CD8-positive, alpha-beta T cell (primary cell): ENCODE measurements at regions of chr13 and their contacts with region 1.

Region 1: GRCh38 chr13:41352935-41353840 is 42.1 kb downstream of the NAA16 start:
- DNase-seq: peak; percentile 21 to 83 (median 57)
- ATAC-seq: peak; percentile 55
- H3K4me3 ChIP-seq: no peak overlapping the region
- H3K4me3 Mint-ChIP-seq: peak overlapping the region; percentile 54
- H3K27ac ChIP-seq: peak overlapping the region in 1 of 2 experiments; percentile 58
- H3K27ac Mint-ChIP-seq: peak overlapping the region; percentile 94
- H3K4me1 ChIP-seq: peaks cover 49% of the 10 kb centered on the region
- H3K4me1 Mint-ChIP-seq: peaks cover 59% of the 10 kb centered on the region
- H3K27me3 ChIP-seq: no peaks in the 10 kb centered on the region
- H3K27me3 Mint-ChIP-seq: no peaks in the 10 kb centered on the region
- CTCF ChIP-seq: peak; percentile 95

Region 2: GRCh38 chr13:41370736-41371135 is 17.5 kb after region 1 on chr13:
- CTCF ChIA-PET with region 1: interaction called, 4 read pairs
- POLR2A ChIA-PET with region 1: no interaction called
- intact Hi-C with region 1: loop called in 1 of 2 experiments (anchors 2 kb)
- DNase-seq: no peak
- ATAC-seq: no peak
- H3K4me3 ChIP-seq: no peak overlapping the region
- H3K4me3 Mint-ChIP-seq: no peak overlapping the region
- H3K27ac ChIP-seq: no peak overlapping the region
- H3K27ac Mint-ChIP-seq: peak overlapping the region; percentile 21
- H3K4me1 ChIP-seq: no peaks in the 10 kb centered on the region
- H3K4me1 Mint-ChIP-seq: peaks cover 23% of the 10 kb centered on the region
- H3K27me3 ChIP-seq: no peaks in the 10 kb centered on the region
- H3K27me3 Mint-ChIP-seq: no peaks in the 10 kb centered on the region
- CTCF ChIP-seq: no peak

Region 3: GRCh38 chr13:41411522-41411921 is 58.3 kb after region 1 on chr13:
- CTCF ChIA-PET with region 1: no interaction called
- POLR2A ChIA-PET with region 1: no interaction called
- intact Hi-C with region 1: loop called in 1 of 2 experiments (anchors 5 kb)
- DNase-seq: peak in 4 of 9 experiments; percentile 17 to 66 (median 38)
- ATAC-seq: no peak
- H3K4me3 ChIP-seq: no peak overlapping the region
- H3K4me3 Mint-ChIP-seq: no peak overlapping the region
- H3K27ac ChIP-seq: no peak overlapping the region
- H3K27ac Mint-ChIP-seq: no peak overlapping the region
- H3K4me1 ChIP-seq: no peaks in the 10 kb centered on the region
- H3K4me1 Mint-ChIP-seq: peaks cover 3% of the 10 kb centered on the region
- H3K27me3 ChIP-seq: no peaks in the 10 kb centered on the region
- H3K27me3 Mint-ChIP-seq: no peaks in the 10 kb centered on the region
- CTCF ChIP-seq: no peak

Region 4: DNA sequence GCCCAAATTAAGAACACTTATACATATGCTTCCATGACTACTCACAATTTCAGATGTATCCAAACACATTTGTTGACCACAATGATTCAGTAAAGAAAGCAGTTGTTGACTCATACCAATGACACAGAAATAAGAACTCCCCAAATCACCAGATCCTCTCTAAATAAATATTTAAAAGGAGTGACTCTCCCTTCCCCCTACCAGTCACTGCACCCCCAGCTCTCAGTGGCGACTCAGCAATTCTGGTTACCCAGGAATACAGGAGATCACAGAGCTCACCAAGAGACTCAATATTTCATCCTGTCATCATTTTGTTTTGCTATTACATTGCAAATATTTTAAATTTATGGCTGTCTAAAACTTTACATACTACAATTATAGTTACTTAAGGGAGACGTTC is 235.7 kb after region 1 on chr13:
- CTCF ChIA-PET with region 1: interaction called, 3 read pairs
- POLR2A ChIA-PET with region 1: no interaction called
- intact Hi-C with region 1: loop called (anchors 5 kb)
- DNase-seq: peak in 1 of 9 experiments; percentile 12
- ATAC-seq: no peak
- H3K4me3 ChIP-seq: no peak overlapping the region
- H3K4me3 Mint-ChIP-seq: no peak overlapping the region
- H3K27ac ChIP-seq: no peak overlapping the region
- H3K27ac Mint-ChIP-seq: no peak overlapping the region
- H3K4me1 ChIP-seq: no peaks in the 10 kb centered on the region
- H3K4me1 Mint-ChIP-seq: peaks cover 4% of the 10 kb centered on the region
- H3K27me3 ChIP-seq: no peaks in the 10 kb centered on the region
- H3K27me3 Mint-ChIP-seq: no peaks in the 10 kb centered on the region
- CTCF ChIP-seq: no peak

Region 5: GRCh38 chr13:41652727-41653361 is 299.7 kb after region 1 on chr13:
- CTCF ChIA-PET with region 1: interaction called, 3 read pairs
- POLR2A ChIA-PET with region 1: no interaction called
- intact Hi-C with region 1: loop called (anchors 1 kb)
- DNase-seq: peak in 7 of 9 experiments; percentile 24 to 67 (median 43)
- ATAC-seq: peak; percentile 56
- H3K4me3 ChIP-seq: no peak overlapping the region
- H3K4me3 Mint-ChIP-seq: no peak overlapping the region
- H3K27ac ChIP-seq: no peak overlapping the region
- H3K27ac Mint-ChIP-seq: no peak overlapping the region
- H3K4me1 ChIP-seq: no peaks in the 10 kb centered on the region
- H3K4me1 Mint-ChIP-seq: peaks cover 11% of the 10 kb centered on the region
- H3K27me3 ChIP-seq: no peaks in the 10 kb centered on the region
- H3K27me3 Mint-ChIP-seq: no peaks in the 10 kb centered on the region
- CTCF ChIP-seq: peak; percentile 64

Region 6: DNA sequence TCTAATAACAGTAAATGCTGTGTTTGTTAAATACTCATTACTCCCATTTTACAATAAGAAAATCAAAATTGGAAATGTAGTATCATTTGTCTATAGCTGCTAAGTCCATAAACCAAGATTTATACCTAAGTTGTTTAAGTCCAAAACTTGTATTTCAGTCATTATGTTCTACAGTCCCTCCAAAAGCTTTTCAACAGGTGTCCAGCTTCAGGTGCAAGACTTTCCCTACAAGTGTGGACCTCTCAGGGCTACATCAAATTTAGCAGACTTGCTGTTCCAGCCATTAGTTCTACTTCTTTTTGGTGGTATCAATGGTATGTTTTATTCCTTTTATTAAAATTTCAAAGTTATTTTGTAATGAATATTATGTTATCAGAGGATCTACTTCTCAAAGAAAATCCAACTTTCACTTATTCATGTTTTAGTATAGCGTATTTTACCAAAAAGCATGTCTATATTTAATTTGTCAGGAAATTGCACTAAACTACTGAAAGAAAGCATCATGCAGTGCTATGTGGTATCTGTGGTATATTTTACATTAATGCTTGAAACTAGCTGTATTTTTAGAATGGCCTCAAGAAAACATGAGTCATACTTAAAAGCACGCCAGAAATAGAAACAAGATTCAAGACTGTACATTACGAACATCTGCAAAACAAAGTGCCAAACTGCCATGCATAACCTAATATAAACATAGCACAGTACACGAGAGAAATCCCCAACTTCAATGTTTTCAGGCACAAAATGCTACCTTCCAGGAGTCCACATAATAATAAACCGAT is 563.2 kb after region 1 on chr13:
- CTCF ChIA-PET with region 1: no interaction called
- POLR2A ChIA-PET with region 1: no interaction called
- intact Hi-C with region 1: loop called in 1 of 2 experiments (anchors 10 kb)
- DNase-seq: peak in 2 of 9 experiments; percentile 33 to 59
- ATAC-seq: peak; percentile 65
- H3K4me3 ChIP-seq: no peak overlapping the region
- H3K4me3 Mint-ChIP-seq: peak overlapping the region; percentile 26
- H3K27ac ChIP-seq: peak overlapping the region in 1 of 2 experiments; percentile 31
- H3K27ac Mint-ChIP-seq: peak overlapping the region; percentile 42
- H3K4me1 ChIP-seq: peaks cover 24% of the 10 kb centered on the region
- H3K4me1 Mint-ChIP-seq: peaks cover 47% of the 10 kb centered on the region
- H3K27me3 ChIP-seq: no peaks in the 10 kb centered on the region
- H3K27me3 Mint-ChIP-seq: no peaks in the 10 kb centered on the region
- CTCF ChIP-seq: no peak

Region 7: GRCh38 chr13:42048682-42049453 is 695.7 kb after region 1 on chr13:
- CTCF ChIA-PET with region 1: no interaction called
- POLR2A ChIA-PET with region 1: no interaction called
- intact Hi-C with region 1: no loop called
- DNase-seq: peak; percentile 23 to 74 (median 60)
- ATAC-seq: peak; percentile 70
- H3K4me3 ChIP-seq: peak overlapping the region; percentile 80 to 83
- H3K4me3 Mint-ChIP-seq: peak overlapping the region; percentile 86
- H3K27ac ChIP-seq: peak overlapping the region in 1 of 2 experiments; percentile 20
- H3K27ac Mint-ChIP-seq: peak overlapping the region; percentile 60
- H3K4me1 ChIP-seq: peaks cover 10% of the 10 kb centered on the region
- H3K4me1 Mint-ChIP-seq: peaks cover 12% of the 10 kb centered on the region
- H3K27me3 ChIP-seq: no peaks in the 10 kb centered on the region
- H3K27me3 Mint-ChIP-seq: no peaks in the 10 kb centered on the region
- CTCF ChIP-seq: no peak

Region 8: DNA sequence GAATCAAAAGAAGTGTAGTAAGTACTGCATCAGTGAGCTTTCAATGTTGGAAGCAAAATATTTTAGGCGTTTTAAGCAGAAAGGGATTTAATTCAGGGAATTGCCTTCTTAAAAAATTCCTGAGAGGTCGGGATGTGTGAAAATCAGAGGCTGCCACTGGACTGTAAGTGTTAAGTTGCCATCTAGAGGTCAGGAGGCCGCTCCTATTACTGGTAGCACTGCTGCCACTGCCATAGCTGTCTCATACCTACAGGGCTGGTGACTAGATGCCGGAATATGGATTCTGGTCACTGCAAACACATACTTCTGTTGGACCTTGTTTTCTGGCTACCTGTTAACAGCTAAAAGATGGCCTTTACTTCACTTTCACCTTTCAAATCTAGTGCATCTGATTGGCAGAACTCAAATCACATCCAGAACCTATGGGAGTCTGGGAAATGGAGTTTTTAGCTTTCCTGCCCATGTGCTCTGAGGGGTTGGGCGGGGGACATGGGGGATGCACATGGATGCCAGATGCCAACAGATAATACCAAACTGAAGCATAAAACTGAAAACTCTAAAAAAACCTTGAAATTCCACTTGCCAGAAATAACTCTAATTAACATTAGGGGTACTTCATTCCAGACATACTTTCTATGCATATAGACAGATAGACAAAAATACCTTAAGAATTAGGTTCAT is 725.1 kb after region 1 on chr13:
- CTCF ChIA-PET with region 1: no interaction called
- POLR2A ChIA-PET with region 1: no interaction called
- intact Hi-C with region 1: no loop called
- DNase-seq: peak in 1 of 9 experiments; percentile 3
- ATAC-seq: no peak
- H3K4me3 ChIP-seq: no peak overlapping the region
- H3K4me3 Mint-ChIP-seq: no peak overlapping the region
- H3K27ac ChIP-seq: no peak overlapping the region
- H3K27ac Mint-ChIP-seq: no peak overlapping the region
- H3K4me1 ChIP-seq: no peaks in the 10 kb centered on the region
- H3K4me1 Mint-ChIP-seq: peaks cover 11% of the 10 kb centered on the region
- H3K27me3 ChIP-seq: no peaks in the 10 kb centered on the region
- H3K27me3 Mint-ChIP-seq: no peaks in the 10 kb centered on the region
- CTCF ChIP-seq: no peak